Dorsolateral prefrontal cortex (tissue), 120 donors: ENCODE measurements at regions of chr1 and their contacts with region 1.

Region 1: GRCh38 chr1:67853704-67854103 is 20.4 kb upstream of the GNG12 start:
- DNase-seq: peak in 7 of 10 donors; percentile 22 to 63 (median 53)
- H3K4me3 ChIP-seq: no peak overlapping the region
- H3K27ac ChIP-seq: no peak overlapping the region
- H3K27me3 ChIP-seq: no peaks in the 10 kb centered on the region
- CTCF ChIP-seq: peak in 55 of 56 donors; percentile 11 to 73 (median 56)

Region 2: DNA sequence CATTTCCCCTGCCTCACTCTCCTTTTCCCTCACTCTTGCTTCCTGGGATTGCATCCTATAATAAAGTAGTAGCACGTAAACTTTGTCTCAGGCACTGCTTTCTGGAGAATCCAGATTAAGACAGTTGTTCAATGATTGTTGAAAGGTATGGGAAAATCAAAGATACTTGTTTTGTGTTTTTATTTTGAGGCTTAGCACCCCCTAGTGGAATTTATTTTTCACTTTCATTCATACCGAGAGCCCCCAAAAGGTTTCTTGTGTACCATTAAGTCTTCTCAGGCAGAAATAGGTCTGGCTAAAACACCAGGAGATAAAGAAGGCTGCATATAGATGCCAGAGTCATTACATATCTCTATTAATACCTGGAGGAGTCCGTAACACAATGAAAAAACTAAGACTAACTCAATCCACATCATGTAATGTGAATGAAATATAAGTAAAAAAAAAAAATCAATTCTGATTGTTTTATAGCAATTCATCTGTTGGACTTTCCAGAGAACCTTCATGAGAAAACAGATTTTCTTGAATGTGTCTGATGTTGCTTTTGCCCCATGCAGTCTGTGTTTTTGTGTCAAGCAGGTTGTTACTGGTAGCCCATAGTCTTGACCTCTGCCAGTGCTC is 492.6 kb after region 1 on chr1:
- intact Hi-C with region 1: loop called (anchors 2 to 10 kb)
- DNase-seq: no peak
- H3K4me3 ChIP-seq: no peak overlapping the region
- H3K27ac ChIP-seq: no peak overlapping the region
- H3K27me3 ChIP-seq: no peaks in the 10 kb centered on the region
- CTCF ChIP-seq: peak; percentile 40 to 81 (median 60)